ENCODE measurements at regions of chr1 and their contacts with region 1.

Region 1: GRCh38 chr1:153168686-153169085 is 18.0 kb upstream of the SPRR2G start:
- DNase-seq: no peak
- ATAC-seq: no peak
- H3K4me3 ChIP-seq: no peak overlapping the region
- H3K27ac ChIP-seq: no peak overlapping the region
- H3K4me1 ChIP-seq: no peaks in the 10 kb centered on the region
- H3K27me3 ChIP-seq: peaks cover 48% of the 10 kb centered on the region
- CTCF ChIP-seq: no peak
- POLR2A ChIP-seq: no peak
- RAD21 ChIP-seq: no peak

Region 2: DNA sequence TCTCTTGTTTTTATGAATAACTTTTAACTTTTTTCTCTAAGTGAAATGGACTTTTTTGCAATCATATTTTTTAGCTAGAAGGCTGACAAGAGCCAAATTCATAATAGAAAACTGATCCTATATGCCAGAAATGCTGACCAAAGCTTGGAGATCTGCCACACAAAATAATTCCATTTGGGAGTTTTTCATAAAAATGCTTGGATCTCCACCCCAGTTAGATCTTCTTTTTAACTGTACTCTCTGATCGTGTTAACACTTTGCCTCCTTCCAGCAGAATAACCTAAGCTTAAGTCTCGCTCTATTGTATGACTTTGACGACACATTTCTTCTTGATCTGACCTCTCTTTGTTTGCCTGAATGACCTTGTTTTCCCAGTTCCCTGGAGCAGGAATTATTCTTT is 825.7 kb before region 1 on chr1:
- CTCF ChIA-PET with region 1: no interaction called
- POLR2A ChIA-PET with region 1: no interaction called
- RAD21 ChIA-PET with region 1: no interaction called
- intact Hi-C with region 1: no loop called
- DNase-seq: no peak
- ATAC-seq: no peak
- H3K4me3 ChIP-seq: no peak overlapping the region
- H3K27ac ChIP-seq: no peak overlapping the region
- H3K4me1 ChIP-seq: no peaks in the 10 kb centered on the region
- H3K27me3 ChIP-seq: peaks cover 40% of the 10 kb centered on the region
- CTCF ChIP-seq: no peak
- POLR2A ChIP-seq: no peak
- RAD21 ChIP-seq: no peak

Region 3: DNA sequence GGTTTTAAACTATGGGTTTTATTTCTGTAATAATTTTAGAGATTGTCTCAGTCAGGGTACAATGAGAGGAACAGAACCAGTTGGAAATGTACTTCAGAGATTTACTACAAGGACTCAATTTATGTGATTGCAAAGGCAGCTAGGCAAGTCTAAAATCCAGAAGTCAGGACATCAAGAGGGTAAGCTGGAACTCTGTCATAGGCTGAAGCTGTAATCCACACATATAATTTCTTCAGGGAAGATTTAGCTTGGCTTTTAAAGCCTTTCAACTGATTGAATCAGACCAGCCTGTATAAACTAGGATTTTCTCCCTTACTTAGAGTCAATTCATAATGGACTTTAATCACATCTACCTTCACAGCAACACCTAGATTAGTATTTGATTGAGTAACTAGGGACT is 10.2 kb after region 1 on chr1:
- CTCF ChIA-PET with region 1: interaction called, 3 read pairs
- POLR2A ChIA-PET with region 1: no interaction called
- RAD21 ChIA-PET with region 1: no interaction called
- intact Hi-C with region 1: loop called (anchors 1 kb)
- DNase-seq: no peak
- ATAC-seq: no peak
- H3K4me3 ChIP-seq: no peak overlapping the region
- H3K27ac ChIP-seq: no peak overlapping the region
- H3K4me1 ChIP-seq: no peaks in the 10 kb centered on the region
- H3K27me3 ChIP-seq: peaks cover 35% of the 10 kb centered on the region
- CTCF ChIP-seq: no peak
- POLR2A ChIP-seq: no peak
- RAD21 ChIP-seq: no peak

Measured in HCT116 (cell line).